Dendritic cell treated with granulocyte-macrophage colony-stimulating factor and Interleukin-4, amounts not matched to agents 40 ng/mL and 50 ng/mL, for 4 days (primary cell): ENCODE measurements at regions of chr5 and their contacts with region 1.

Region 1: DNA sequence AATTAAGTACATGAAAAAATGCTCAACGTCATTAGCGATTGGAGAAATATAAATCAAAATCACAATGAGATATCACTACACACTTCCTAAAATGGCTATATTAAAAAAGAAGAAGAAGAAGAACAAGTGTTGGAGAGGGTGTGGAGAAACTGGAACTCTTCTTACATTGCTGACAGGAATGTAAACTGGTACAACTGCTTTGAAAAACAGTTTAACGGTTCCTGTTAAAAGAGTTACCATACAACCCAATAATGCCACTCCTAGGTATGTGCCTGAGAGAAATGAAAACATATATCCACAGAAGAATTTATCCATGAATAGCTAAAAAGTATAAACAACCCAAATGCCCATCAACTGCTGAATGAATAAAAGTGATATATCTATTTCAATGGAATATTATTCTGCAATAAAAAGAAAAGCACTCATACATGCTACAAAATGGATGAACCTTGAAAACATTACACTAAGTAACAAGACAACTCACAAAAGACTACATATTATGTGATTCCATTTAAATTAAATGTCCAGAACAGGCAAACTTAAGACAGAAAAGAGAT is 9.0 kb downstream of the FEM1C start:
- H3K4me3 Mint-ChIP-seq: no peak overlapping the region
- H3K27ac Mint-ChIP-seq: no peak overlapping the region
- H3K4me1 Mint-ChIP-seq: peaks cover 62% of the 10 kb centered on the region
- H3K27me3 Mint-ChIP-seq: no peaks in the 10 kb centered on the region

Region 2: GRCh38 chr5:115194676-115195075 is 340.9 kb before region 1 on chr5:
- intact Hi-C with region 1: no loop called
- H3K4me3 Mint-ChIP-seq: no peak overlapping the region
- H3K27ac Mint-ChIP-seq: no peak overlapping the region
- H3K4me1 Mint-ChIP-seq: no peaks in the 10 kb centered on the region
- H3K27me3 Mint-ChIP-seq: peaks cover 27% of the 10 kb centered on the region

Region 3: GRCh38 chr5:115579747-115580173 is 44.2 kb after region 1 on chr5:
- intact Hi-C with region 1: loop called (anchors 5 kb)
- H3K4me3 Mint-ChIP-seq: no peak overlapping the region
- H3K27ac Mint-ChIP-seq: no peak overlapping the region
- H3K4me1 Mint-ChIP-seq: peaks cover 41% of the 10 kb centered on the region
- H3K27me3 Mint-ChIP-seq: no peaks in the 10 kb centered on the region